ENCODE measurements at regions of chr19 and their contacts with region 1.

Region 1: GRCh38 chr19:5480427-5480836 is 25.2 kb downstream of the ZNRF4 start:
- DNase-seq: no peak
- H3K4me3 ChIP-seq: no peak overlapping the region
- CTCF ChIP-seq: peak; percentile 46

Region 2: GRCh38 chr19:5369962-5370367 is 110.5 kb before region 1 on chr19:
- in situ Hi-C with region 1: loop called (anchors 5 kb)
- DNase-seq: no peak
- H3K4me3 ChIP-seq: no peak overlapping the region
- CTCF ChIP-seq: peak; percentile 68

Region 3: GRCh38 chr19:5557691-5558090 is 77.3 kb after region 1 on chr19:
- in situ Hi-C with region 1: loop called (anchors 10 kb)
- DNase-seq: no peak
- H3K4me3 ChIP-seq: no peak overlapping the region
- CTCF ChIP-seq: no peak

Measured in astrocyte of the cerebellum (primary cell).